HepG2 (cell line): ENCODE measurements at regions of chr3 and their contacts with region 1.

Region 1: GRCh38 chr3:149512209-149512782 is 37.8 kb downstream of the TM4SF4 start:
- DNase-seq: peak; percentile 64
- ATAC-seq: peak; percentile 87
- H3K4me3 ChIP-seq: no peak overlapping the region; a peak in 1 of 6 replicates
- H3K27ac ChIP-seq: no peak overlapping the region
- H3K4me1 ChIP-seq: peaks cover 24% of the 10 kb centered on the region
- H3K27me3 ChIP-seq: no peaks in the 10 kb centered on the region
- CTCF ChIP-seq: peak; percentile 93
- EP300 ChIP-seq: no peak
- POLR2A ChIP-seq: no peak
- RAD21 ChIP-seq: peak; percentile 79

Region 2: GRCh38 chr3:149494022-149494758 is 18.1 kb before region 1 on chr3:
- CTCF ChIA-PET with region 1: interaction called, 7 read pairs
- POLR2A ChIA-PET with region 1: no interaction called
- in situ Hi-C with region 1: no loop called
- intact Hi-C with region 1: loop called (anchors 1 kb)
- DNase-seq: peak; percentile 64
- ATAC-seq: peak; percentile 88
- H3K4me3 ChIP-seq: peak overlapping the region; percentile 46 to 65 (median 62)
- H3K27ac ChIP-seq: peak overlapping the region; percentile 66
- H3K4me1 ChIP-seq: peaks cover 47% of the 10 kb centered on the region
- H3K27me3 ChIP-seq: no peaks in the 10 kb centered on the region
- CTCF ChIP-seq: peak; percentile 91
- EP300 ChIP-seq: no peak
- POLR2A ChIP-seq: no peak; a peak in 1 of 4 replicates
- RAD21 ChIP-seq: peak; percentile 70

Region 3: DNA sequence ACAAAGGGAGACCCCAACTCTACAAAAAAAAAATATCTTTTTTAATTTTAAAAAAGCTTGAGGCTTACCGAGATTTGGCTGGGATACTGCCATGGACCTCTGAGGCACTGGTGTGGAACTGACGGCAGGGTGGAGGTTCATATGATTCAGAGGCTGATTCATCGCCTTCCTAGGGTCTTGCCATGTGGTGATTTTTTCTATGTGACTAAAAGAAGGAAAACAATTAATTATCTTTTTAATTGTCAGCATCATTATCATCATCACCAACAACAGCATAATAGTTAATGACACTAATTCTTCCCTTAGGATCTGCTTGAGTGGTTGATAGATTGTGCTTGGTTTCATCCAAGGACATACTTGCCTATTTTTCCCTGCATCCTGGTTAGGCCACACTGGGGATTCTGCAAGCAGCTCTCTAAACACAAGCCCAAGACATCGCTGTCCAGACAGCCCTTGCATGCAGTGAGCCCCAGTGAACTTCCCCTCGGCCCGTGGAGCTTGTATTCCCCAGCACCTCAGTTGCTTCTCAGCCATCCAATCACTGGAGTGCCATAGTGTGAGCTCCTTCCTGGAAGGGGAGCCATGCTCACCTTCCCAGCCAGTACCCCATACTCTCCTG is 60.6 kb after region 1 on chr3:
- CTCF ChIA-PET with region 1: no interaction called
- POLR2A ChIA-PET with region 1: no interaction called
- in situ Hi-C with region 1: no loop called
- intact Hi-C with region 1: loop called (anchors 5 kb)
- DNase-seq: no peak
- ATAC-seq: no peak
- H3K4me3 ChIP-seq: no peak overlapping the region
- H3K27ac ChIP-seq: no peak overlapping the region
- H3K4me1 ChIP-seq: peaks cover 28% of the 10 kb centered on the region
- H3K27me3 ChIP-seq: no peaks in the 10 kb centered on the region
- CTCF ChIP-seq: no peak
- EP300 ChIP-seq: no peak
- POLR2A ChIP-seq: no peak
- RAD21 ChIP-seq: no peak

Region 4: GRCh38 chr3:149752051-149752787 is 239.9 kb after region 1 on chr3 and contains the start of gene COMMD2:
- CTCF ChIA-PET with region 1: interaction called, 5 read pairs
- POLR2A ChIA-PET with region 1: no interaction called
- in situ Hi-C with region 1: no loop called
- intact Hi-C with region 1: loop called (anchors 1 kb)
- DNase-seq: peak; percentile 90
- ATAC-seq: peak; percentile 100
- H3K4me3 ChIP-seq: peak within 1 kb of the TSS; percentile 88 to 99 (median 97)
- H3K27ac ChIP-seq: peak within 1 kb of the TSS; percentile 67
- H3K4me1 ChIP-seq: peaks cover 25% of the 10 kb centered on the region
- H3K27me3 ChIP-seq: no peaks in the 10 kb centered on the region; a peak in 1 of 5 replicates
- CTCF ChIP-seq: peak; percentile 70
- EP300 ChIP-seq: peak; percentile 29 to 60; a peak in 2 of 4 replicates
- POLR2A ChIP-seq: peak; percentile 79 to 89
- RAD21 ChIP-seq: no peak; the same call in 1 of the 2 replicates
- total RNA-seq, gene COMMD2: 57.6 and 73.2 TPM in 2 replicates

Region 5: GRCh38 chr3:149771652-149772271 is 259.5 kb after region 1 on chr3:
- CTCF ChIA-PET with region 1: no interaction called
- POLR2A ChIA-PET with region 1: interaction called, 3 read pairs
- in situ Hi-C with region 1: loop called (anchors 5 kb)
- intact Hi-C with region 1: loop called (anchors 5 kb)
- DNase-seq: peak; percentile 25
- ATAC-seq: peak; percentile 91
- H3K4me3 ChIP-seq: no peak overlapping the region
- H3K27ac ChIP-seq: no peak overlapping the region
- H3K4me1 ChIP-seq: no peaks in the 10 kb centered on the region
- H3K27me3 ChIP-seq: 0 out of 5 replicates have a peak, but pooled peaks cover 0 to 9% of the 10 kb centered on the region in 2 experiments
- CTCF ChIP-seq: peak; percentile 75
- EP300 ChIP-seq: no peak
- POLR2A ChIP-seq: no peak
- RAD21 ChIP-seq: no peak

Region 6: DNA sequence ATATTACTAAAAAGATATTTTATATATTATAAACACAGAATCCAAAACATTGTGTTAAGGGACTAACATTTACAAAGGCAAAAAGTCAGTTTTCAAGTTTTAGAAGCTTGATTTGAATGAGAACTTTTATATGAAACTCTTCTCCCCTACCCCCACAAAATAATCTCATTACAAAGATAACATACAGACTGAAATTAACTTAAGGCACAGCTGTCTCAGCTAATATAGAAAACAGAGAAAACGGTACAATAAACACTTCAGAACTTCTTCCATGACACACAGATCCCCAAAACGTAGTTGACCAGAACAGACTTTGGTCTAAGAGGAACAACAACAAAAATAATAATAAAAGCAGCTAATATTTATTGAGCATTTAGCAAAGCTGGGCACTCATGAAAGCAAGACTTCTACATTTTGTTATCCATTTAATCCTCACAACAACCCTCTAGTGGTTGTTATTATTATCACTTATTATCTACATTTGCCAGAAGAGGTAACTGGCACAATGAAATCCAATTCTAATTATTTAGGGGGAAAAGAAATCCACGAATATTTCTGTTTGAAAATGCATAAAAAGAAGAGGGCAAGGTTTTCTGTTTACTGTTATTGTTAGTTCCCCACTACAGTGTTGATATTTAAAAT is 390.3 kb after region 1 on chr3:
- CTCF ChIA-PET with region 1: no interaction called
- POLR2A ChIA-PET with region 1: no interaction called
- in situ Hi-C with region 1: no loop called
- intact Hi-C with region 1: loop called (anchors 10 kb)
- DNase-seq: no peak
- ATAC-seq: no peak
- H3K4me3 ChIP-seq: no peak overlapping the region
- H3K27ac ChIP-seq: no peak overlapping the region
- H3K4me1 ChIP-seq: no peaks in the 10 kb centered on the region
- H3K27me3 ChIP-seq: no peaks in the 10 kb centered on the region
- CTCF ChIP-seq: no peak
- EP300 ChIP-seq: no peak
- POLR2A ChIP-seq: no peak
- RAD21 ChIP-seq: no peak

Region 7: GRCh38 chr3:150613709-150614480 is 1101.6 kb after region 1 on chr3:
- CTCF ChIA-PET with region 1: no interaction called
- POLR2A ChIA-PET with region 1: no interaction called
- in situ Hi-C with region 1: no loop called
- intact Hi-C with region 1: no loop called
- DNase-seq: no peak
- ATAC-seq: no peak
- H3K4me3 ChIP-seq: no peak overlapping the region
- H3K27ac ChIP-seq: no peak overlapping the region
- H3K4me1 ChIP-seq: no peaks in the 10 kb centered on the region
- H3K27me3 ChIP-seq: no peaks in the 10 kb centered on the region
- CTCF ChIP-seq: no peak
- EP300 ChIP-seq: no peak
- POLR2A ChIP-seq: no peak
- RAD21 ChIP-seq: no peak